ENCODE measurements at regions of chr19 and their contacts with region 1.

Region 1: GRCh38 chr19:36915992-36916830 is at the starts of genes ZNF568 and ZNF829:
- DNase-seq: peak; percentile 88
- H3K4me3 ChIP-seq: peak within 1 kb of the TSS; percentile 4 to 99 (median 50)
- H3K27ac ChIP-seq: peak within 1 kb of the TSS; percentile 67
- H3K4me1 ChIP-seq: no peaks in the 10 kb centered on the region
- H3K27me3 ChIP-seq: no peaks in the 10 kb centered on the region
- CTCF ChIP-seq: peak; percentile 63 to 80
- POLR2A ChIP-seq: no peak
- total RNA-seq, gene ZNF568: 4.1 and 6.4 TPM in 2 replicates
- total RNA-seq, gene ZNF829: 1.2 and 1.3 TPM in 2 replicates

Region 2: DNA sequence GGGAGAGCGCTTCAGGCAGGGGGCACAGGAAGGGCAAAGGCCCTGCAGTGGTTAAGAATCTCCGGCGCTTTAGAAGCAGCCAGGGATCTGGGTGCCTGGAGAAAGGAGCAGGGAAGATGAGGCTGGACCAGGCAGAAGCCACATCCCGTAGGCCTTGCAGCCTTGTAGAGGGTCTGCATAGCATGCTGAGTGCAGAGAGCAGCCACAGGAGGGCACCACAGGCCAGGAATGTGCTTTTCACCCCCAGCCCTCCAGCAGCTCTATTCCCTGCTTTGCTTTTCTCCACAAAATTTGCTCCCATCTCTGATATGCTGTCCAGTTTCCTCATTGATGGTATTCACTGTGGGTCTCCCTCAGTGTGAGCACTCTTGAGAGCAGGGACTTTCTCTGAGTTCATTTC is 855.8 kb before region 1 on chr19:
- CTCF ChIA-PET with region 1: no interaction called
- POLR2A ChIA-PET with region 1: no interaction called
- dilution Hi-C with region 1: no loop called
- intact Hi-C with region 1: loop called (anchors 5 kb)
- DNase-seq: peak; percentile 69
- H3K4me3 ChIP-seq: no peak overlapping the region
- H3K27ac ChIP-seq: no peak overlapping the region
- H3K4me1 ChIP-seq: peaks cover 8% of the 10 kb centered on the region
- H3K27me3 ChIP-seq: no peaks in the 10 kb centered on the region
- CTCF ChIP-seq: peak; percentile 72 to 89
- POLR2A ChIP-seq: no peak

Region 3: GRCh38 chr19:36772311-36773222 is 143.6 kb before region 1 on chr19 and contains the start of gene ZNF850:
- CTCF ChIA-PET with region 1: no interaction called
- POLR2A ChIA-PET with region 1: no interaction called
- dilution Hi-C with region 1: no loop called
- intact Hi-C with region 1: loop called (anchors 2 kb)
- DNase-seq: peak; percentile 92
- H3K4me3 ChIP-seq: peak within 1 kb of the TSS; percentile 31 to 76 (median 40)
- H3K27ac ChIP-seq: peak within 1 kb of the TSS; percentile 33
- H3K4me1 ChIP-seq: peaks cover 11% of the 10 kb centered on the region
- H3K27me3 ChIP-seq: no peaks in the 10 kb centered on the region
- CTCF ChIP-seq: no peak
- POLR2A ChIP-seq: no peak
- total RNA-seq, gene ZNF850: 3.6 and 4.5 TPM in 2 replicates

Region 4: DNA sequence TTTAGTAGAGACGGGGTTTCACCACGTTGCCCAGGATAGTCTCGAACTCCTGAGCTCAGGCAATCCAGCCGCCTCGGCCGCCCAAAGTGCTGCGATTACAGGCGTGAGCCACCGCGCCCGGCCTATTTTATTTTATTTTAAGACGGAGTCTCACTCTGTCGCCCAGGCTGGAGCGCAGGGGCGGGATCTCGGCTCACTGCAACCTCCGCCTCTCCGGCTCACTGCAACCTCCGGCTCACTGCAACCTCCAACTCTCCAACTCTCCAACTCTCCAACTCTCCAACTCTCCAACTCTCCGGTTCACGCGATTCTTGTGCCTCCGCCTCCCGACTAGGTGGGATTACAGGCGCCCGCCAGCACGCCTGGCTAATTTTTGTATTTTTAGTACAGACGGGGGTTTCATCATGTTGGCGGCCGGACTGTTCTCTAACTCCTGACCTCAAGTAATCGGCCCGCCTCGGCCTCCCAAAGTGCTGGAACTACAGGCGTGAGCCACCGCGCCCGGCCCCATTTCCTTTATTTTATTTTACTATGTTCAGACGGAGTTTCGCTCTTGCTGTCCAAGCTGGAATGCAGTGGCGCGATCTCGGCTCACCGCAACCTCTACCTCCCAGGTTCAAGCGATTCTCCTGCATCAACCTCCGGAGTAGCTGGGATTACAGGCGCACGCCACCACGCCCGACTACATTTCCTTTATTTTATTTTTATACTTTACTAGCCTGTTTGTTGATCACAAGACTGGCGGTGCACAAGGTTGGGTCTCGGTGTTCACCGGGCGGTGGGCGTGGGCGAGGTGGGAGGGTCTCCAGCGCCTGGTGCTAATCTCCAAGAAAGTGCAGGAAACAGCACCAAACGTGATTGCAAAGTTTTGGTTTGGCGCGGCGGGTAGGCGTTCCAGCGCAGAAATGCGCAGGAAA is 119.9 kb before region 1 on chr19:
- CTCF ChIA-PET with region 1: no interaction called
- POLR2A ChIA-PET with region 1: no interaction called
- dilution Hi-C with region 1: no loop called
- intact Hi-C with region 1: no loop called
- DNase-seq: no peak
- H3K4me3 ChIP-seq: peak overlapping the region; percentile 34 to 83 (median 73)
- H3K27ac ChIP-seq: no peak overlapping the region
- H3K4me1 ChIP-seq: no peaks in the 10 kb centered on the region
- H3K27me3 ChIP-seq: no peaks in the 10 kb centered on the region
- CTCF ChIP-seq: no peak
- POLR2A ChIP-seq: no peak

Region 5: DNA sequence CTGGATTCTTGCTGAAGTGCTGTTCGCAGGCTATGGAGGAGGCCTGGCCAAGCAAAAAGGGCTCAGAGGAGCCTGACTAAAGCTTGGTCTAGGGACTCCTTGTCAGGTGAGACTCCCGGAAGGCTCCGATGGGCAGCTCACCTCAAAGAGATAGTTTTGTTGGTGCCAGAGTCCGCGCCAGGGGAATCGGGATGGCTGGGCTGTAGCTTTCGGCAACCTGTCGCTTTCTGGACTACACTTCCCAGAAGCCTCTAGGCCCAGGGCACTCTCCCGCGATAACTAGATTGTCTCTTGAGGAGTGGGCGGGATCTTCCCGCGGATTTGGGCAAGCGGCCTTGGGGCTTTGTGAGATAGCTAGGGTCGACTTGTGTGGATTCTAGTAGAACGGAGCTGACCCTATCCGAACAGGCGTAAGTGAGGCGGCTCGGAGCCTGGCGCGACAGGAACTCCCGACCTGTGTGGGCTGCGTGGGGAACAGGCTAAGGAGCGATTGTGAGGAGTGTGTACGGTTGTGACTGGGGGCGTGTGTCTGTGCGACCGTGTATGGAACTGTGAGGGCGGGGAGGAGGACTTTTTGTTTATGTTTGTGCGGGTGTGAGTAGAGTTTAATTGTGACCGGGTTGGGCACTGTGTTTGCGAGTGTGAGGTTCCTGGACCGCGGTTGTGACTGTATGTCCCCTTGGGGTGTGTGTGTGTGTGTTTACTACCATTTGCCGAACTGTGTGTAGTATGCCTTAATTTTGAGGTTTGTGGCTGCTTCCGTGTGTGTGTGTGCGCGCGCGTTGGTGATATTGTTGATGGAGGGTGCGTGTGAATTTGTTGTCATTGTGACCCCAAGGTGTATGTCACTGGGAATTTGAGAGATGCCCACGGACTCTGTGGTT is 65.4 kb before region 1 on chr19 and contains the start of gene ZNF345:
- CTCF ChIA-PET with region 1: interaction called, 3 read pairs
- POLR2A ChIA-PET with region 1: no interaction called
- dilution Hi-C with region 1: no loop called
- intact Hi-C with region 1: loop called (anchors 1 kb)
- DNase-seq: peak; percentile 95
- H3K4me3 ChIP-seq: peak within 1 kb of the TSS; percentile 49 to 75 (median 72)
- H3K27ac ChIP-seq: peak within 1 kb of the TSS; percentile 83
- H3K4me1 ChIP-seq: peaks cover 10% of the 10 kb centered on the region
- H3K27me3 ChIP-seq: no peaks in the 10 kb centered on the region
- CTCF ChIP-seq: no peak
- POLR2A ChIP-seq: peak; percentile 44
- total RNA-seq, gene ZNF345: 3.4 and 3.8 TPM in 2 replicates

Region 6: GRCh38 chr19:37334179-37335071 is 418.2 kb after region 1 on chr19:
- CTCF ChIA-PET with region 1: no interaction called
- POLR2A ChIA-PET with region 1: no interaction called
- dilution Hi-C with region 1: no loop called
- intact Hi-C with region 1: loop called (anchors 5 kb)
- DNase-seq: peak; percentile 94
- H3K4me3 ChIP-seq: peak overlapping the region; percentile 65 to 83 (median 78)
- H3K27ac ChIP-seq: peak overlapping the region; percentile 74
- H3K4me1 ChIP-seq: peaks cover 19% of the 10 kb centered on the region
- H3K27me3 ChIP-seq: no peaks in the 10 kb centered on the region
- CTCF ChIP-seq: no peak
- POLR2A ChIP-seq: peak; percentile 66